Psoas muscle (tissue), 8 donors: ENCODE measurements at regions of chr3 and their contacts with region 1.

Region 1: GRCh38 chr3:126982471-126983175 is at the start of gene PLXNA1:
- DNase-seq: peak; percentile 84 to 88
- ATAC-seq: peak; percentile 85 to 92 (median 89)
- H3K4me3 ChIP-seq: peak within 1 kb of the TSS; percentile 80
- H3K27ac ChIP-seq: peak within 1 kb of the TSS; percentile 62
- H3K4me1 ChIP-seq: peaks cover 11% of the 10 kb centered on the region
- H3K27me3 ChIP-seq: no peaks in the 10 kb centered on the region
- CTCF ChIP-seq: peak; percentile 75
- total RNA-seq, gene PLXNA1: 14.7 to 20.1 (median 15.7) TPM

Region 2: DNA sequence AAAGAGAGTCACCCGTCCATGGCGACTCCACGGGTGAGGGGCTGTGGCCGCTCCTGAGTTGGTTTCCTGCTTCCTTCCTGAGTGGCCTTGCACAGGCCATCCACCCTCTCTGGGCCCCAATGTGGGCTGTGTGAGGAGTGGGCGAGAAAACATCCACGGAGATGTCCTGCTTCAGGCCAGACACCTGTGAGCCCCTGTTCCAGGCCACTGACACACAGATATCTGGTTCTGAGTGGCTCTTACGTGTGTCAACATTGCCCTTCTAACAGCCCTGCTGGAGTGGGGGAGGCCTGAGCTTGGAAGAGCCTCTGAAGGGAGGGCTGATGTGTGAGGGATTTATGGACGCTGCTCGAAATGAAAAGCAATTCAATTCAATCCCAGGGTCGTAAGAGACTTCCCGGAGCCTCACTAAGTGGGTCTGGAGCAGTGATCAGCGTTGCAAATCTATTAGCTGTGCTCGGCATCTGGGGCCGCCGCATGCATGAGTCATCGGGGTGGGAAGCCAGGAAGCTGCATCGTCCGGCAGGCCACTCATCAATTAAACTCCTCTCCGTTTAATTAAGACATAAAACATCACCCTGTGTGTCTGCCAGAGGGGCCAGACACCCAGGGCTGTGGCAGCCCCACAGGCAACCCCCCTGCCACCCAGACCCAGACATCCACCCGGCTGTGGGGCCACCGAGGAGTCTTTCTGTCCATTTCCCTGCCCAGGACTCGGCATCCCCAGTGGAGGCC is 190.3 kb after region 1 on chr3:
- intact Hi-C with region 1: loop called in 1 of 2 experiments (anchors 5 kb)
- DNase-seq: no peak
- ATAC-seq: no peak
- H3K4me3 ChIP-seq: no peak overlapping the region
- H3K27ac ChIP-seq: no peak overlapping the region
- H3K4me1 ChIP-seq: peaks cover 12% of the 10 kb centered on the region
- H3K27me3 ChIP-seq: no peaks in the 10 kb centered on the region
- CTCF ChIP-seq: no peak

Region 3: DNA sequence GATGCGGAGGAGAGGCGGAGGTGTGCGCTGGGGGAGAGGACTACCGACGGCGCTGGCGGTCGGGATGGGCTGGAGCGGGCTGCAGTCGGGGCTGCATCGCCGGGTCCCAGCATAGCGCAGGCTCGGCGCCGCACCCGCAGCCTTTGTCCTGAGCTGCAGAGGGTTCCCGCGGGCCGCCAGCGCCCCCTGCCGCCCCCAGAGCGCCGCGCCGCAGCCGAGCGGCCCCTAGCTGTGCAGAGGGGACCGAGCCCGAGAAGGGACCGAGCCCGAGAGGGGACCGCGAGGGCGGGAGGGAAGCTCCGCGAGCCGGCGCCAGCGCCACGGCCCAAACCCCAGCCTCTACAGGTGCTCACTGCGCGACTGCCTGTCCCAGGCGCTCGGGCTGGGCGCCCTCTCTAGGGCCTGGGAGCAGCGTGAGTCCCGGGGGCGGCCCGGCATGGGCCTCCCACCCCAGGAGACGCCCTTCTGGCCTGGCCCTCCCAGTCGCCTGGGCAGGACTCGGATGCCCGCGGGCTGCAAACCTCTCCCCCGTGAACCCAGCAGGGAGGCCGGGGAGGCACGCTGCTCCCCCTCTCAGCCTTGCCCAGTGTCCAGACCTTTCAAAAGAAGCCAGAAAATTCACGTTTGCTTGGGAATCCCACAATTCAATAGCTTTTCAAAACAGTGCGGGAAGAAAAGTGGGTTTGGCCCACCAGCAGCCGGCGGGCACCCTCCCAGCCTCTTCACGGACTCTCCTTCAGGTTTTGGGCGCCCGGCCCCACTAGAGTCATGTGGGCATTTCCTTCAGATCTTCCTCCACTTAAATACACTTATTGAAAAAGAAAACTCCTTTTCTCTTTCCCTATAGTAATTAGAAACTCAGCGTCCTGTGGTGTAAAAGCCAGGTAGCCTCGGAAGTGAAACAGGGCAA is 473.2 kb after region 1 on chr3:
- intact Hi-C with region 1: loop called in 1 of 2 experiments (anchors 1 kb)
- DNase-seq: peak; percentile 76 to 82
- ATAC-seq: peak; percentile 87 to 93 (median 89)
- H3K4me3 ChIP-seq: peak overlapping the region; percentile 52
- H3K27ac ChIP-seq: no peak overlapping the region
- H3K4me1 ChIP-seq: peaks cover 5% of the 10 kb centered on the region
- H3K27me3 ChIP-seq: peaks cover 0 to 57% (median 20%) of the 10 kb centered on the region in 3 donors
- CTCF ChIP-seq: peak; percentile 84

Region 4: GRCh38 chr3:127544192-127544802 is 561.7 kb after region 1 on chr3:
- intact Hi-C with region 1: loop called (anchors 5 to 10 kb)
- DNase-seq: peak; percentile 69 to 84
- ATAC-seq: peak; percentile 42 to 69 (median 58)
- H3K4me3 ChIP-seq: no peak overlapping the region
- H3K27ac ChIP-seq: no peak overlapping the region
- H3K4me1 ChIP-seq: no peaks in the 10 kb centered on the region
- H3K27me3 ChIP-seq: no peaks in the 10 kb centered on the region
- CTCF ChIP-seq: peak; percentile 74